ENCODE measurements at regions of chr15 and their contacts with region 1.

Region 1: GRCh38 chr15:73633111-73633990 is at the start of gene NPTN:
- DNase-seq: peak; percentile 81
- H3K4me3 ChIP-seq: peak within 1 kb of the TSS; percentile 92
- CTCF ChIP-seq: no peak

Region 2: DNA sequence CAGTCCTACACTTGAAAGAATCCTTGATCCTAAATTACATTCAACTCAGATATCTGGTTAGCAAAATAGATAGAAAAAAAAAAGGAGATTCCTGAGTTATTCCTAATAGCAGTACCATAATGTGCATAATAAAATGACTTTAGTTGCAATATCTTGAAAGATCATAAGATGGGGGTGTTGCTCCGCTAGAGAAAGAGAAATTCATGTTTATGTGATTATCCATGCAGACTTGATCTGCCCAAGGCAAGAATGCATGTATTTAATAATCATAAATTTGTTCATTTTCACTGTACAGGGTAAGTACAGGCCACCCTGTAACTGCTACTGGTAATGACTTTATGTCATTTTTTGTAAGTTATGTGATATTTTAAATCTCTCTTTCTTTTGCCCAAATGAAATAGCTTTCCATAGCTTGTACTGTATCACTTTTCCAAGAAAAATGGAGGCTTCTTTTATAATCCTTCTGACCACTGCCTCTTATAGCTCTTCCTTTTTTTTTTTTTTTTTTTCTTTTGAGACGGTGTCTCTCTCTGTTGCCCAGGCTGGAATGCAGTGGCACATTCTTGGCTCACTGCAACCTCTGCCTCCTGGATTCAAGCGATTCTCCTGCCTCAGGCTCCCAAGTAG is 349.1 kb before region 1 on chr15:
- CTCF ChIA-PET with region 1: interaction called, 28 read pairs
- POLR2A ChIA-PET with region 1: no interaction called
- DNase-seq: no peak
- H3K4me3 ChIP-seq: no peak overlapping the region
- CTCF ChIP-seq: peak; percentile 27

Region 3: DNA sequence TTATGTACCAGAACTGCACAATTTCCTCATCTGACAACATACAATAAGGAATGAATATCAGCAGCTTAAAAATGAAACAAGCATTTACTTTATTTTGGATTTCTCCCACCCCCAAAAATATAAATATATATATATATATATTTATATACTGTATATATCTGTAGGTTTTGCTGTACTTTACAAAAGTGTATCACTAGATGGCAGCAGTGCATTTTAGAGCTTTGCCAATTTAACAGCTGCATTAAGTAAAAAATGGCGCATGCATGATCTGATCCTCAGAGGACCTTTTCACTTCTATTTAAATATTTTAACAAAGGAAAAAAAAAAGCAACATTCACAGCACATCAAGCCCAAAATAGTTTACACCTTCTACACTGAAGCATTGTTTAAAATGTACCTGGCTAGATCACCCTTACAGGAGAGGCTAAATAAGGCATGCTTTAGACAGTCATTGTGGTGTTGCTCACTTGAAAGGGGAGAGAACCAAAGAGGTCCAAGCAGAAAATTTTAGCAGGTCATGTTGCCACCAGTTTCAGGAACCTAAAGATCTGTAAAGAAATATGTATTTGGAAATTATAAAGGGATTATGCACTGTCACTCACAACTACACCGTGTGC is 72.7 kb before region 1 on chr15:
- CTCF ChIA-PET with region 1: interaction called, 212 read pairs
- POLR2A ChIA-PET with region 1: interaction called, 4 read pairs
- DNase-seq: peak; percentile 23
- H3K4me3 ChIP-seq: no peak overlapping the region
- CTCF ChIP-seq: peak; percentile 32

Region 4: DNA sequence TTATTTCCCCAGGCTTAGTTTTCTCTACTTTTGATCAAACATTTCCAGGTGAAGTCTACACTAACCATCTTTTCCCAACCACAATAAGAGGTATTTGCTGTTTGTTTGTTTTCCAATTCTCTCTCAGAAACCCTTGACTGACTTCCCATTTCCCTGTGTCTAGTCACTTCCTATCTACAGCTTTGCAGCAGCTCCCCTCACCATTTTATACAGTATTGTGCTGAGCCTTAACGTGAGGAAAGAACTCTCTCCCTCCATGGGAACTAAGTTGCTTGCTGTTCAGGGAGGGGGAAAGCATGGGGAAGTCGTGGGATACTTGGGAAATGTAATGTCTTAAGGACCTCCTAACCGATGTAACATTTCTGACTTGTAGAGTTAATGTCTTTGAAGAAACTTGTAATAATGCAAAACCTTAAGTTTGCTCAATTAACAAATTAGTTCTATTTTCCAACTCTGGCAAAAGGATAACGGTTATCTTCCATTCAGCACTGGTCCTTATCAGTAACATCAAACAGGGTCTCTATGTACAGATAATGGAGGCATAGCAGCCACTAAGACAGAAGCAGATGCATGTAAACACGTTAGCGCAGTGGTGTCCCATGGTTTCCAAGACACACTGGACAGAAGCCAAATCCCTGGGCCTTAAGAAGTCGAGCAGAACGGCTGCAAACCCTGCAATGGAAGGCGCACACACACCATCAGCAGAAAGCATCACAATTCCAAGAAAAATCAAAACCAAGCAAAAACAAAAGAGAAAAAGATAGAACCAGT is 39.9 kb before region 1 on chr15:
- CTCF ChIA-PET with region 1: interaction called, 28 read pairs
- POLR2A ChIA-PET with region 1: interaction called, 5 read pairs
- DNase-seq: no peak
- H3K4me3 ChIP-seq: no peak overlapping the region
- CTCF ChIP-seq: no peak

Region 5: GRCh38 chr15:73617301-73617831 is 16.0 kb before region 1 on chr15:
- CTCF ChIA-PET with region 1: interaction called, 53 read pairs
- POLR2A ChIA-PET with region 1: interaction called, 9 read pairs
- DNase-seq: no peak
- H3K4me3 ChIP-seq: no peak overlapping the region
- CTCF ChIP-seq: no peak

Region 6: DNA sequence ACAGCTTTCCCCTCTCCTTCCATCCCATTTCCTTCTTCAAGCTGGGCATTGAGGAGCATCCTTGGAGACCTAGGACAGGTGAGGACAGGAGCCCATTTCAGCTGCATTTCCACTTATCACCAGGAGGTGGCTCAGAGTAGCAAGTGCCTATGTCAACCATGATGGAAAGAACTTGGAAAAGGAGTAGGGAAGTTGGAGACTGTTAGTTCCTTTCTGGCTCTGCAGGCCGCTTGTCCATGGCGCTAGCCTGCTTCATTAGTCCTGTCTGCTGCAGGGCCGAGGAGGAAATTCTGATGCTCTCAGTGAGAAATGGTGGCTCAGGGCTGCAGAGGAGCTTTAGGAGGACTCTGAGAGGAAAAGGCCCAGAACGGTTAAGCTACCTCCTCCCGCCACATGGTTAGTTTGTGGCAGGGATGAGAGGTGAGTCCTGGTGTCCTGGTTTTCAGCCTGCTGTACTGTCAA is 43.8 kb after region 1 on chr15:
- CTCF ChIA-PET with region 1: interaction called, 165 read pairs
- POLR2A ChIA-PET with region 1: no interaction called
- DNase-seq: no peak
- H3K4me3 ChIP-seq: no peak overlapping the region
- CTCF ChIP-seq: peak; percentile 81

Region 7: GRCh38 chr15:73727330-73727976 is 94.1 kb after region 1 on chr15:
- CTCF ChIA-PET with region 1: interaction called, 12 read pairs
- POLR2A ChIA-PET with region 1: no interaction called
- DNase-seq: peak; percentile 62
- H3K4me3 ChIP-seq: no peak overlapping the region
- CTCF ChIP-seq: no peak

Measured in AG04449 (cell line).